Thyroid gland (tissue), 4 donors: ENCODE measurements at regions of chr1 and their contacts with region 1.

Region 1: DNA sequence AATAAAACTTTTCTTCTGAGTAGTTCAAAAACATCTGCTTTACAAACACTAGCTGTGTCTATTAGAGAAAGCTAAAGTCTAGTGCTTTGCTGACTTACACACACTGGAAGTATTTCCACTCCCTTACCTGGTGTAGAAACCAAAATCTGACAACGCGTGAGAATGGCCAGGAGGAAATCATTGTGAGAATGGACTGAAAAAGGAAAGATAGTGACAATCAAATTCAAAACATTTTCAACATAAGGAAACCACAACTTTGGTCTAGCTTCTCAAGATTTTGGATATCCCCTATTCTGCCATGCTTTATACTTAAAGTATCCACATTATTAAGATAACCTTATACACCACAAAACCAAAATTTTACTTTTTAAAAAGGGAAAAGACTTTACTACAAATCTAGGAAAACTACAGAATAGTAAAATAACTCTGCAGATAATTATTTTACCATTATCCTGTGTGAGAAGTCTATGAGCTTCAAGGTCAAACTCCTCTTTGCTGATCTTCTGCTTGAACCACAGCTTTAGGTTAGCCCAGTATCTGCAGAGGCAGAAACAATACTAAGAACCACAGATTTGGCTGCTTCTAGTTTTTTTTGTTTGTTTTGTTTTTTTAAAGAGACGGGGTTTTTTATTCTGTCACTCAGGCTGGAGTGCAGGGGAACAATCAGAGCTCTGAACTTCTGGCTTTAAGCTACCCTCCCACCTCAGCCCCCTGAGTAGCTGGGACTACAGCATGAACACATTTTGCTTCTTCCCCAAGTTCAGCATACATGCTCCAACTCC is 6.6 kb downstream of the TADA1 start:
- DNase-seq: no peak
- H3K4me3 ChIP-seq: no peak overlapping the region
- H3K27ac ChIP-seq: no peak overlapping the region
- H3K4me1 ChIP-seq: peaks cover 11 to 15% of the 10 kb centered on the region in 2 donors
- H3K27me3 ChIP-seq: no peaks in the 10 kb centered on the region
- CTCF ChIP-seq: no peak
- POLR2A ChIP-seq: no peak

Region 2: GRCh38 chr1:166740668-166741276 is 128.7 kb before region 1 on chr1:
- intact Hi-C with region 1: no loop called
- DNase-seq: peak; percentile 12 to 15
- H3K4me3 ChIP-seq: no peak overlapping the region
- H3K27ac ChIP-seq: no peak overlapping the region
- H3K4me1 ChIP-seq: no peaks in the 10 kb centered on the region
- H3K27me3 ChIP-seq: no peaks in the 10 kb centered on the region
- CTCF ChIP-seq: no peak
- POLR2A ChIP-seq: no peak

Region 3: GRCh38 chr1:166838766-166839599 is 30.5 kb before region 1 on chr1 and contains the start of gene POGK:
- intact Hi-C with region 1: loop called (anchors 5 kb)
- DNase-seq: peak; percentile 93 to 94
- H3K4me3 ChIP-seq: peak within 1 kb of the TSS; percentile 19 to 75 (median 47)
- H3K27ac ChIP-seq: peak within 1 kb of the TSS; percentile 83 to 92 (median 91)
- H3K4me1 ChIP-seq: peaks cover 23 to 34% of the 10 kb centered on the region in 2 donors
- H3K27me3 ChIP-seq: no peaks in the 10 kb centered on the region
- CTCF ChIP-seq: peak in 1 of 6 experiments; percentile 3
- POLR2A ChIP-seq: peak in 1 of 2 donors; percentile 90
- total RNA-seq, gene POGK: 31.4 to 41.4 (median 33.7) TPM

Region 4: GRCh38 chr1:167249702-167250101 is 380.2 kb after region 1 on chr1:
- intact Hi-C with region 1: no loop called
- DNase-seq: no peak
- H3K4me3 ChIP-seq: no peak overlapping the region
- H3K27ac ChIP-seq: no peak overlapping the region
- H3K4me1 ChIP-seq: peaks cover 4 to 10% of the 10 kb centered on the region in 2 donors
- H3K27me3 ChIP-seq: no peaks in the 10 kb centered on the region
- CTCF ChIP-seq: no peak
- POLR2A ChIP-seq: no peak